CD8-positive, alpha-beta memory T cell (primary cell): ENCODE measurements at regions of chr10 and their contacts with region 1.

Region 1: DNA sequence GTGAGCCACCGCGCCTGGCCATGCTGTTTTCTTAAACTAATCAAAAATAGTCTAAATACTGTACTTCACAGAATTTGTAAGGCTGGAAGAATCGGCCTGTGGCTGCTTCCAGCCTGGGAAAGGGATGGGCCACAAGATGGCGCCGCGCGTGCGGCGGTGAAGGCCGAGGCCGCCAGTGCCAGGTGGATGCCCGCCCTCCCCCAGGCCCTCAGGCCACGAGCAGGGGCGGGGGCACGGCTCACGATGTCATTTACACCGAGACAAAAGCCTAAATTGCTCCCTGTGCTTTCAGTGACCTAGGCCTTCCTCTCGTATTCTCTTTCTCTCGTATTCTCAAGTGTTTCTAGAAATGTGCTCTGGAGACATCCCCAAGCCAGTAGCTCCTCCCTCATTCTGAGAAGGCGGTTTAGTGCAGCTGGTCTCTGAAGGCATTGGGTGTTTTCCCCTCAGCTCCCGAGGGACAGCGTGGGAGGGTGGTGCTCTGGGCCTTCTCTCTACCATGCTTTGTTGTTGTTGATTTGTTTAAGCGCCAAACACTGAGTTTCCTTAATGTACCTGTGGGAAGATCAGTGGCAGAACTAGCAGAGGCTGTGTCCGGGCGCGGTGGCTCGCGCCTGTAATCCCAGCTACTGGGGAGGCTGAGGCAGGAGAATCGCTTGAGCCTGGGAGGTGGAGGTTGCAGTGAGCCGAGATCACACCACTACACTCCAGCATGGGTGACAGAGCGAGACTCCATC is 68.4 kb downstream of the CDC123 start:
- DNase-seq: peak; percentile 42 to 73 (median 49)
- H3K4me3 ChIP-seq: peak overlapping the region; percentile 20
- H3K4me3 Mint-ChIP-seq: peak overlapping the region; percentile 34 to 79 (median 75)
- H3K27ac ChIP-seq: no peak overlapping the region
- H3K27ac Mint-ChIP-seq: peak overlapping the region in 4 of 8 donors; percentile 33 to 87 (median 76)
- H3K4me1 ChIP-seq: no peaks in the 10 kb centered on the region
- H3K4me1 Mint-ChIP-seq: peaks cover 13 to 29% (median 28%) of the 10 kb centered on the region in 3 donors
- H3K27me3 ChIP-seq: no peaks in the 10 kb centered on the region
- H3K27me3 Mint-ChIP-seq: no peaks in the 10 kb centered on the region

Region 2: GRCh38 chr10:12287772-12288171 is 23.4 kb after region 1 on chr10:
- CTCF ChIA-PET with region 1: no interaction called
- POLR2A ChIA-PET with region 1: no interaction called
- DNase-seq: no peak
- H3K4me3 ChIP-seq: no peak overlapping the region
- H3K4me3 Mint-ChIP-seq: no peak overlapping the region
- H3K27ac ChIP-seq: no peak overlapping the region
- H3K27ac Mint-ChIP-seq: no peak overlapping the region
- H3K4me1 ChIP-seq: no peaks in the 10 kb centered on the region
- H3K4me1 Mint-ChIP-seq: no peaks in the 10 kb centered on the region
- H3K27me3 ChIP-seq: no peaks in the 10 kb centered on the region
- H3K27me3 Mint-ChIP-seq: peaks cover 3 to 4% of the 10 kb centered on the region in 2 donors

Region 3: GRCh38 chr10:12656518-12657142 is 392.3 kb after region 1 on chr10:
- CTCF ChIA-PET with region 1: interaction called, 68 read pairs
- POLR2A ChIA-PET with region 1: no interaction called
- DNase-seq: peak in 2 of 5 donors; percentile 44 to 50
- H3K4me3 ChIP-seq: no peak overlapping the region
- H3K4me3 Mint-ChIP-seq: no peak overlapping the region
- H3K27ac ChIP-seq: no peak overlapping the region
- H3K27ac Mint-ChIP-seq: no peak overlapping the region
- H3K4me1 ChIP-seq: no peaks in the 10 kb centered on the region
- H3K4me1 Mint-ChIP-seq: peaks cover 0 to 4% (median 0%) of the 10 kb centered on the region in 3 donors
- H3K27me3 ChIP-seq: no peaks in the 10 kb centered on the region
- H3K27me3 Mint-ChIP-seq: no peaks in the 10 kb centered on the region

Region 4: DNA sequence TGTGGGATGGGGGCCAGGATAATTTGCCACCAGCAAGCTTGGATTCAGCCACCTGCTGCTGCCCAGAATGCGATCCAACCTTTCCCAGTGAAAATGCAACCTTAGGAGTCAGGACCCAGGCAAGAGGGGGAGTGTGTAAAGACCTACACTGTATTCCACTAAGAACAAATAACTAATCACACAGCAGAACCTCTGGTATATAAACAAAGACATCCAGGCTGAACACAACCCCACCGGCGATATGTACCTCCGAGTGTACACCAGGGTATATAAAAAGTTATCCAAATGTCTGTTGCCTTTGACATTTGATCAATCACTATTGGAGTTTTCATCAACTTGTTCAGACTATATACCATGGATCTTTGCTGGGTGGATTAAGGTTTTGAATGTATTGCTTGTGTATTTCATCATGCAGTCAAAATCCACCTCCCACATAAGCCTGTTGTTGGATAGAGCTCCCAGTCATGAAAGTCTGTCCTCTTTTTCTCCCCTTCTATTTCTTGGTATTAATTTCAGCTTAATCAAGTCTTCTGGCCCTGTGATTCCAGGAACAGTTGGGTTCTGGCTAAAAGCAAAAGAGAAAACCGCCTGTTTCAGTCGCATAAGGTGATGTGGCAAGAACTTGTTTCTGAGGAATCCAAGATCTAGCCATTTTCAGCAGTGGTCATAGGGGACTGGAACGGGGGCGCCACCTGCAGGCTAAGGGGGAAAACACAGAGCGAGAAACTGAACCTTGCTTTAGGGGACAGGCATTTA is 446.4 kb after region 1 on chr10:
- CTCF ChIA-PET with region 1: interaction called, 67 read pairs
- POLR2A ChIA-PET with region 1: no interaction called
- DNase-seq: peak; percentile 45 to 71 (median 58)
- H3K4me3 ChIP-seq: no peak overlapping the region
- H3K4me3 Mint-ChIP-seq: no peak overlapping the region
- H3K27ac ChIP-seq: no peak overlapping the region
- H3K27ac Mint-ChIP-seq: peak overlapping the region in 1 of 8 donors; percentile 1
- H3K4me1 ChIP-seq: no peaks in the 10 kb centered on the region
- H3K4me1 Mint-ChIP-seq: peaks cover 1 to 5% (median 3%) of the 10 kb centered on the region in 3 donors
- H3K27me3 ChIP-seq: no peaks in the 10 kb centered on the region
- H3K27me3 Mint-ChIP-seq: peaks cover 0 to 1% of the 10 kb centered on the region in 2 donors